ENCODE measurements at regions of chr12 and their contacts with region 1.

Region 1: DNA sequence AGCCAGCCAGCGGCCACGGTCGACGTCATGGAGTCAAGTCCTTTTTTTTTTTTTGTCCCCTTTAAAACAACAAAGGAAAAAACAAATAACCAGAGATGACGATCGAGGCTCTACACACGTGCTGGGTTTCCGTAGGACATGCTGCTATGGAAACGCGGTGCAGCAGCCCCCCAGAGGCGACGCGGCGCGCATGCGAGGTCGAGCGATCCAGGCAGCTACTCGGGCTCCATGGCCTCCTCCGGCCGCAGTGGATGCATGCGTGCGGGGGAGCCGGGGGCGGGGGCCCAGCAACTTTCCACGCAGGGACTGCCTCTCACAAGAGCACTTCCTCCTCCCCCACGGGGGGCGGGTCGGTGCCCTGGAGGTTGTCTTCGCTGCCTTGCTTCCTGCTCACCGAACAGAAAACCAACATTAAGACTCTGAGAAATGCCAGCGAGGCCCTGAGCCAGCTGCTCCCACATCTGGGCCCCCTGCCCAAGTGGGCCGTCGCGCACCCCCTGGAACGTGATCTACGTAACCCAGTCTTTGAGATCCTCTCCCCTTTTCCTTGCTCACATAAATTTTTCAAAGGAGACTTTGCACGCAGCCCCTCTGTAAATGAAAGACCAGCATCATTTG is 30.7 kb downstream of the P2RX4 start:
- DNase-seq: peak; percentile 86
- ATAC-seq: peak; percentile 83
- H3K4me3 Mint-ChIP-seq: peak overlapping the region; percentile 48
- H3K27ac Mint-ChIP-seq: peak overlapping the region; percentile 84
- H3K4me1 Mint-ChIP-seq: peaks cover 38% of the 10 kb centered on the region
- H3K27me3 Mint-ChIP-seq: no peaks in the 10 kb centered on the region

Region 2: DNA sequence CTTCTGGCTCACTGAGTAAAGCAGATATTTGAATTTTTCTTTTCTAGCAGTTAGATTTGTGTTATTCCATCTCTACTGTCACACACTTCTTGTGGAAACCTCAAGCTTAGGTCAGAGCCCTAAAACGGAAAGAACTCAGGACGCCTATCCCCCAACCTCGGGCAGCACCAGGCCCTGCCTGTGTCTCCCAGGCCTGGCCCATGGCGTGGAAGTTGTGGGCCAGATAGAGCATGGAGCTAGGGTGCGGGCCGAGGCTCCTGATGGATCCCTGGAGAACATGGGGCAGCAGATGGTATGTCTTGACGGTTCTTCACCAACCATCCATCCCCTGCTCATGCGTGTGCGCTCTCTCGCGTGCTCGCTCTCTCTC is 10.1 kb before region 1 on chr12:
- CTCF ChIA-PET with region 1: interaction called, 32 read pairs
- POLR2A ChIA-PET with region 1: no interaction called
- intact Hi-C with region 1: no loop called
- DNase-seq: no peak
- ATAC-seq: no peak
- H3K4me3 Mint-ChIP-seq: no peak overlapping the region
- H3K27ac Mint-ChIP-seq: no peak overlapping the region
- H3K4me1 Mint-ChIP-seq: peaks cover 25% of the 10 kb centered on the region
- H3K27me3 Mint-ChIP-seq: no peaks in the 10 kb centered on the region